ENCODE measurements at regions of chr2 and their contacts with region 1.

Region 1: GRCh38 chr2:228318218-228318617 is 136.7 kb upstream of the SPHKAP start:
- DNase-seq: no peak
- ATAC-seq: peak; percentile 88
- H3K4me3 ChIP-seq: no peak overlapping the region
- H3K27ac ChIP-seq: no peak overlapping the region
- H3K4me1 ChIP-seq: no peaks in the 10 kb centered on the region
- H3K27me3 ChIP-seq: no peaks in the 10 kb centered on the region
- CTCF ChIP-seq: peak; percentile 36 to 48 (median 45); a peak in 4 of 6 replicates
- EP300 ChIP-seq: no peak
- POLR2A ChIP-seq: no peak
- RAD21 ChIP-seq: peak; percentile 23; the same call in 1 of the 2 replicates

Region 2: DNA sequence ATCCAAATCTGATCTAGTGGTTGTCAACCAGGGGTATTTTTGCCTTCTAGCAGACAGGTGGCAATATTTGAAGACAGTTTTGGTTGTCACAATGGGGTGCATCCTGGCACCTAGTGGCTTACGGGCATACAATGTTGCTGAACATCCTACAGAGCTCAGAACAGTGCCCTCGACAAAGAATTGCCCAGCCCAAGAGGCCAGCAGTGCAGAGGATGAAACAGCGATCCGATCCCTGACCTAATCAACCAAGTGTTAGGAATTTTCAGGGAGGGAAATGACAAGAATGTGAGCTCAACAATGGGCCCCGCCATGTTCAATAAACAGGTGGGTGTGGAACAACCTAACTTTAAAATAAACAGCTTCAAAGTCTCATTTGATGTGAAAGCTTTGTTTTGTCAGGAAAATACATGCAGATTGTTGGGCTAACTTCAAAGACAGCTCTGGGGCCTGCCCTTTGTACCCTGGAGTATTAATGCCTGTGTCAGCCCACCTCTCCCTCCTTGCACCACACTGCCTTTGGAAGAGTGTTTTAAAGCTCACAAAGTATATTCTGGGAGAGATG is 674.1 kb before region 1 on chr2:
- CTCF ChIA-PET with region 1: no interaction called
- POLR2A ChIA-PET with region 1: no interaction called
- RAD21 ChIA-PET with region 1: no interaction called
- SMC1A ChIA-PET with region 1: no interaction called
- in situ Hi-C with region 1: no loop called
- intact Hi-C with region 1: no loop called
- DNase-seq: no peak
- ATAC-seq: peak; percentile 64
- H3K4me3 ChIP-seq: no peak overlapping the region
- H3K27ac ChIP-seq: no peak overlapping the region
- H3K4me1 ChIP-seq: no peaks in the 10 kb centered on the region
- H3K27me3 ChIP-seq: peaks cover 0 to 1% of the 10 kb centered on the region in 2 experiments; a peak in 1 of 4 replicates
- CTCF ChIP-seq: peak in 1 of 3 experiments; percentile 31; a peak in 1 of 6 replicates
- EP300 ChIP-seq: no peak
- POLR2A ChIP-seq: no peak
- RAD21 ChIP-seq: no peak

Region 3: GRCh38 chr2:228556717-228557116 is 238.5 kb after region 1 on chr2:
- CTCF ChIA-PET with region 1: no interaction called
- POLR2A ChIA-PET with region 1: interaction called, 14 read pairs
- RAD21 ChIA-PET with region 1: no interaction called
- SMC1A ChIA-PET with region 1: no interaction called
- in situ Hi-C with region 1: no loop called
- intact Hi-C with region 1: no loop called
- DNase-seq: no peak
- ATAC-seq: peak; percentile 59
- H3K4me3 ChIP-seq: no peak overlapping the region
- H3K27ac ChIP-seq: no peak overlapping the region
- H3K4me1 ChIP-seq: no peaks in the 10 kb centered on the region
- H3K27me3 ChIP-seq: no peaks in the 10 kb centered on the region
- CTCF ChIP-seq: no peak
- EP300 ChIP-seq: no peak
- POLR2A ChIP-seq: no peak
- RAD21 ChIP-seq: no peak